Activated CD4-positive, alpha-beta memory T cell treated with anti-CD3 and anti-CD28 coated beads for 36 hours (primary cell): ENCODE measurements at regions of chr19 and their contacts with region 1.

Region 1: DNA sequence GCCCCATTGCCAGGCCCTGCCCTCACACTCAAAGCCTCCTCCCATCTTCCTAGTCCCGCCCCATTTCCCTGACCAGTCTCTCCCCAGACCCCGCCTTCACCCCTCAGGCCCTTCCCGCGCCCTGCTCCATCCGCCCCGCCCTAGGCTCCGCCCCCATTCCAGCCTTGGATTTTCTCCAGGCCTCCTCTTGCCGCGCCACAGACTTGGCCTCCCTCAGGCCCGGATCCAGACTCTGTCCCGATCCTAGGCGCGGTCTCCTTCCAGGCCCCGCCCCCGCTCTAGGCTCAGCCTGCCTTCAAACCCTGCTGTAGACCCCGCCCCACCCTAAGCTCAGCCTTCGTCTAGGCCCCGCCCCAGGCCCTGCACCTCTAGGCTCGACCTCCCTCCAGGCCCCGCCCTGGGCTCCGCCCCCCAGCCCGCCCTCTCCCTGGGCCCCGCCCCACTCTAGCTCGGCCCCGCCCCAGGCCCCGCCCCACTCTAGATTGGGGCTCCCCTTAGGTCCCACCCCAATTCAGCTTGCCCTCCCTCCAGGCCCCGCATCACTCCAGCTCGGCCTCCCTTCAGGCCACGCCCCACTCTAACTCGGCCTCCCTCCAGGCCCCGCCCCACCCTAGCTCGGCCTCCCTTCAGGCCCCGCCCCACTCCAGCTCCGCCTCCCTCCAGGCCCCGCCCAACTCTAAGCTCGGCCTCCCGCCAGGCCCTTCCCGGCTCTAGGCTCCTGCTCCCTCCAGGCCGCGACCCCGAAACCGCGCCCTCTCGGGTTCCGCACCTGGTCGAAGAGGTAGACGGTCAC is 18.5 kb downstream of the LMTK3 start:
- DNase-seq: peak; percentile 92
- H3K4me3 Mint-ChIP-seq: peak overlapping the region; percentile 56
- H3K27ac Mint-ChIP-seq: no peak overlapping the region
- H3K4me1 Mint-ChIP-seq: peaks cover 31% of the 10 kb centered on the region
- H3K27me3 Mint-ChIP-seq: peaks cover 45% of the 10 kb centered on the region

Region 2: DNA sequence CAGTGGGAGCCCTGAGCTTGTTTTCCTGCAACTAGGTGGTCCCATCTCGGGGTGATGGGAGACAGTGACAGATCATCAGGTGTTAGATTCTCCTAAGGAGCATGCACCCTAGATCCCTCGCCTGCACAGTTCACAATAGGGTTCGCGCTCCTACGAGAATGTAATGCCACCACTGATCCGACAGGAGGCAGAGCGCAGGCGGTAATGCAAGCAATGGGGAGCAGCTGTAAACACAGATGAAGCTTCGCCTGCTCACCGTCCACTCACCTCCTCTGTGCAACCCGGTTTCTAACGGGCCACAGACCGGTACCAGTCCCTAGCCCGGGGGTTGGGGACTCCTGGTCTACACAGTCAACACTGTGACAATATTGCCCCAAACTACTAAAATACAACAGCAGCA is 276.2 kb before region 1 on chr19:
- CTCF ChIA-PET with region 1: no interaction called
- POLR2A ChIA-PET with region 1: no interaction called
- intact Hi-C with region 1: no loop called
- DNase-seq: no peak
- H3K4me3 Mint-ChIP-seq: no peak overlapping the region
- H3K27ac Mint-ChIP-seq: no peak overlapping the region
- H3K4me1 Mint-ChIP-seq: no peaks in the 10 kb centered on the region
- H3K27me3 Mint-ChIP-seq: no peaks in the 10 kb centered on the region

Region 3: DNA sequence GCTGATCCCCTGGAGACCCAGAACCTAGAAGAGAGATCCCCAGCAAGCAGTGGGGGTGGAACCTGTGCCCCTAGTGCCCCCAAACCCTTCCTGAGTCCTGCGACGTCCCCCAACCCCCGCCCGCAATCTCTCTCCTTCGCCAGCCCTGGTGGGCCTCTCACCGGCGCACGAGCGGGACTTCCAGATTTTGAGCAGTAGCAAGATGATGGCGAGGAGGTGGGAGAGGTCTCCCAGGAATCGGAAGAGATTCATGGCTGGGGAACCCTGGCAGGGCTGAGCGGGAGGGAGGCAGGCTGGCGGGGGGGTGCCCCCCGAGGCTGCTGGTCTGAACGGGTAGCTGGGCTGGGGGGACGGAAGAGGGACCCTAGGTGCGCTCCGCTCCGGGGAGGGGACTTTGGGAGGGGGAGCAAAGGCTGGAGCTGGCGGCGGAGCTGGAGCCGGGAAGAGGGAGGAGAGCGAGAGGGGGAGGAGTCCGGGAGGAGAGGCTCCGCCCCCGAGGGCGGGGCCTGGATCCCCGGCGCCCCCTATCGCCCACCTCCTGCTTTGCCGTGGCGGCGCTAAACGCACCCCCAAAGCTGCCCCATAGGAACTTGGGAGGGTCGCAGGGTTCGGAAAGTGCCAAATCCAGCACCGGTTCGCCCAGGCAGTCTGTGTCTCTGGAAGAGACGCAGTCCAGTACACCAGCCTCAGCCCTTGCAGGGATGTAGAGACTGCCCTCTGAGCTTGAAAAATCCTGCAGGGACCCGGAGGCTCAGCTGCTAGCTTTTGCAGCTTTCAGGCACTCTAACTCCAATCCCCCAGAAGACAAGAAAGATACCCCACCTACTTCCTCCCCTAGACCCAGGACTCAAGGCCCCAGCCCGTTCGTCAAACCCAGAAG is 101.8 kb before region 1 on chr19 and contains the start of gene KDELR1:
- CTCF ChIA-PET with region 1: interaction called, 10 read pairs
- POLR2A ChIA-PET with region 1: no interaction called
- intact Hi-C with region 1: no loop called
- DNase-seq: peak; percentile 80
- H3K4me3 Mint-ChIP-seq: peak within 1 kb of the TSS; percentile 90
- H3K27ac Mint-ChIP-seq: peak within 1 kb of the TSS; percentile 87
- H3K4me1 Mint-ChIP-seq: peaks cover 25% of the 10 kb centered on the region
- H3K27me3 Mint-ChIP-seq: peaks cover 23% of the 10 kb centered on the region
- total RNA-seq, gene KDELR1: 82.9 to 88.1 TPM

Region 4: GRCh38 chr19:48468775-48469288 is 24.3 kb before region 1 on chr19:
- CTCF ChIA-PET with region 1: interaction called, 10 read pairs
- POLR2A ChIA-PET with region 1: no interaction called
- intact Hi-C with region 1: no loop called
- DNase-seq: peak; percentile 100
- H3K4me3 Mint-ChIP-seq: peak overlapping the region; percentile 83
- H3K27ac Mint-ChIP-seq: peak overlapping the region; percentile 84
- H3K4me1 Mint-ChIP-seq: peaks cover 22% of the 10 kb centered on the region
- H3K27me3 Mint-ChIP-seq: no peaks in the 10 kb centered on the region

Region 5: DNA sequence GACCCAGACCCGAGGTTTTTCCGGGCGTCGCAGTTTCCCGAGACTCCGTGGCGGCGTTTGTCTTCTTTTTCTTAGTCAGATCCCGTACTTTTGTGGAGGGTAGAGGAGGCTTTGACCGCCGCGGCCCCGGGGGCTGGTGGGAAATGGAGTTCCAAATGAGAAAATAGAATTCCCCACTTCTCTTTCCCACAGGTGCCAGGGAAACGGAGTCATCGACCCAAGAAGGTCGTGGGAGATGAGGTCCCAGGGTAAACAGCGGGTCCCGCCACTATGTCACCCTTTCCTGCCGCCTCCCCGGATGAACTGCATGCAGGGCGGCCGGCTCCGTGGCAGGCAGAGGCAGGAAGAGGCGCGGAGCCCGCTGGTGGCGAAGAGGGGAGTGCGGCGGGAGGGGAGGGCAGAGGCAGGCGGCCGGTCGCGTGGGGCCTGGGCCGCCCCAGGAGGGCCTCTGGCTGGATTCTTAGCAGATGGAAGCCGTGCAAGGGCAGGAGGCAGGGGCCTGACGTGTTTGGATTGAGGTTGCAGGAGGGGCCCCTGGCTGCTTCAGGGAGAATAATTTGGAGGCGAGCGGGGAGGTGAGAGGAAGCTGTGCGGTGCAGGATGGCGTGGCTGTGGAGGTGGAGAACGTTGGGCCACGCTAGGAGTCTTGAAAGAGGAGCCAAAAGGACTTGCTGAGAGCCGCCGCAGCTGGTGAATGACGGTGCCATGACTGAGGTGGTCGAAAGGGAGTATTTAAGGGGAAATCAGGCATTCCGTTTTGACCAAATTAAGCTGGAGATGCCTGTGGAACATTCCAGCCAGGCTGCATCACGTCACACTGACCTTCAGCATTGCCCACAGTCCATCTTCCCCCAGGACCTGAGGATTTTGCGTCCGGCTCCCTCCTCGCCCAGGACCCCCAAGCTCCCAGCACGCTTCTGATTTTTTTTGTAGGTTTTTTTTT is 12.3 kb before region 1 on chr19:
- CTCF ChIA-PET with region 1: interaction called, 30 read pairs
- POLR2A ChIA-PET with region 1: interaction called, 3 read pairs
- intact Hi-C with region 1: no loop called
- DNase-seq: peak; percentile 69
- H3K4me3 Mint-ChIP-seq: peak overlapping the region; percentile 73
- H3K27ac Mint-ChIP-seq: peak overlapping the region; percentile 70
- H3K4me1 Mint-ChIP-seq: peaks cover 14% of the 10 kb centered on the region
- H3K27me3 Mint-ChIP-seq: no peaks in the 10 kb centered on the region

Region 6: GRCh38 chr19:48530066-48530720 is 37.1 kb after region 1 on chr19:
- CTCF ChIA-PET with region 1: no interaction called
- POLR2A ChIA-PET with region 1: no interaction called
- intact Hi-C with region 1: no loop called
- DNase-seq: no peak
- H3K4me3 Mint-ChIP-seq: no peak overlapping the region
- H3K27ac Mint-ChIP-seq: no peak overlapping the region
- H3K4me1 Mint-ChIP-seq: no peaks in the 10 kb centered on the region
- H3K27me3 Mint-ChIP-seq: peaks cover 5% of the 10 kb centered on the region

Region 7: GRCh38 chr19:48588670-48589399 is 95.7 kb after region 1 on chr19:
- CTCF ChIA-PET with region 1: interaction called, 164 read pairs
- POLR2A ChIA-PET with region 1: interaction called, 4 read pairs
- intact Hi-C with region 1: no loop called
- DNase-seq: peak; percentile 92
- H3K4me3 Mint-ChIP-seq: peak overlapping the region; percentile 65
- H3K27ac Mint-ChIP-seq: peak overlapping the region; percentile 63
- H3K4me1 Mint-ChIP-seq: peaks cover 18% of the 10 kb centered on the region
- H3K27me3 Mint-ChIP-seq: no peaks in the 10 kb centered on the region